H1 (cell line): ENCODE measurements at regions of chr21 and their contacts with region 1.

Region 1: DNA sequence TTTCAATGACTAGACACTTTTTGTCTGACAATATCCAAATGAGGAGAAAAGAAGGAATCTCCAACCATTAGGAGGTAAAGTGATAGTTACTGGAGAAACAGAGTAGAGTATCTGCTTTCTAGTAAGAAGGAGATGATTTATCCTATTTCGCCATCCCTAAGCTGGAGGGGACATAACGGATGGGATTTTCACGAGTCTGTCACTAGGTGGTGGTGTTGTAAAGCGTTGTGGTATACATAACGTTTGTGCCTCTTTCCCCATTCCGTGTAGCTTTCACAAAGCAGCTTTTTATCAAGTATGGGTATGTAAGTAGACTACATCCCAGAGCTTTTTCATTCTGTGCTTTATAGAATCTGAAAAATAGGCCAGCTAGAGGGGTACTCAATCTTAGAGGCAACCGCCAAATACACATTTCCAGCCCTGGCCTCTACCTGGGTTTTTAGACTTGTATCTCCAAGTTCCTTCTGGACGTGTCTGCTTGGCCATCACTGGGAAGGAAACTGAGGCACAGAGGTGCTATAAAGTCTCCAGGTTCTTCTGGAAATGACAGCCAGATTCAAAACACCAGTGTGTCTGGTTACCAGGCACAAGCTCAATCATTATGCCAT is 33.3 kb upstream of the FAM3B start:
- DNase-seq: no peak
- H3K4me3 ChIP-seq: no peak overlapping the region
- H3K27ac ChIP-seq: no peak overlapping the region
- H3K4me1 ChIP-seq: 0 out of 7 replicates have a peak, but pooled peaks cover 0 to 3% (median 0%) of the 10 kb centered on the region in 4 experiments
- H3K27me3 ChIP-seq: no peaks in the 10 kb centered on the region
- CTCF ChIP-seq: peak; percentile 17 to 82 (median 80)
- EP300 ChIP-seq: no peak
- POLR2A ChIP-seq: no peak
- RAD21 ChIP-seq: peak; percentile 95 to 96

Region 2: DNA sequence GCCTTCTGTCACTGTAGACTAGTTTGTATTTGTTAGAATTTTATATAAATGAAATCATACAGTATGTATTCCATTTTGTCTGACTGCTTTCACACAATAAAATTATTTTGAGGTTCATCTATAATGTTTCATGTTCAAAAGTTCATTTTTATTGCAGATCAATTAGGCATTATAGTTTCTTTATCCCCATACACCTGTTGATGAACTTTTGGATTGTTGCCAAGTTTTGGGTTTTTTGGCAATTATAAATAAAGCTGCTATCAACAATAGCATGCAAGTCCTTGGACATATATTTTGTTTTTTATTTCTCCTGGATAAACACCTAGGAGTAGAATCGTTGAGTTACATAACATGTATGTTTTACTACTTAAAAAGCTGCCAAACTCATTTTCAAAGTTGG is 13.8 kb before region 1 on chr21:
- CTCF ChIA-PET with region 1: interaction called, 25 read pairs
- POLR2A ChIA-PET with region 1: no interaction called
- DNase-seq: no peak
- H3K4me3 ChIP-seq: no peak overlapping the region
- H3K27ac ChIP-seq: no peak overlapping the region
- H3K4me1 ChIP-seq: no peaks in the 10 kb centered on the region
- H3K27me3 ChIP-seq: peaks cover 0 to 1% (median 0%) of the 10 kb centered on the region in 4 experiments; a peak in 1 of 7 replicates
- CTCF ChIP-seq: no peak
- EP300 ChIP-seq: no peak
- POLR2A ChIP-seq: no peak
- RAD21 ChIP-seq: no peak

Region 3: GRCh38 chr21:41349619-41350390 is 66.5 kb after region 1 on chr21:
- CTCF ChIA-PET with region 1: interaction called, 10 read pairs
- POLR2A ChIA-PET with region 1: no interaction called
- DNase-seq: no peak
- H3K4me3 ChIP-seq: no peak overlapping the region
- H3K27ac ChIP-seq: no peak overlapping the region
- H3K4me1 ChIP-seq: no peaks in the 10 kb centered on the region
- H3K27me3 ChIP-seq: no peaks in the 10 kb centered on the region
- CTCF ChIP-seq: no peak
- EP300 ChIP-seq: no peak
- POLR2A ChIP-seq: no peak
- RAD21 ChIP-seq: no peak

Region 4: DNA sequence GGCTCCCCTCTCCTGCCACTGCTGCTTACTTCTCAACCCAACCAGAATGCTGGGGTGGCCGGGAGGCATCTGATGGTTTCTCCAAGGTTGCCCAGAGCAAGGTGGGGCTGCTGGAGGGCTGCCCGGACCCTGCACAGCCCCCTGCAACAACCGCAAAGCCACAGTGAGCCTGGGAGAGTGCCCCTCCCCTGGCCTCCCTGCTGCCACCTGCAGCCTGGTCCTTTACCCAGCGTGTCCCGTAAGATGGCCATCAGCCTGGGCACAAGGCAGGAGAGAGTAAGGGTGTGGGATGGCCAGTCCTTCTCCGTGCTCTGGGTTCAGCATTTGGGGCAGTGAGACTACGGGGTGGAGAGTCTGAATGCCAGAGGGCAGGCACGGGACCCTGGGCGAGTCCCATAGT is 95.6 kb after region 1 on chr21:
- CTCF ChIA-PET with region 1: interaction called, 18 read pairs
- POLR2A ChIA-PET with region 1: no interaction called
- DNase-seq: no peak
- H3K4me3 ChIP-seq: no peak overlapping the region
- H3K27ac ChIP-seq: no peak overlapping the region
- H3K4me1 ChIP-seq: no peaks in the 10 kb centered on the region; a peak in 1 of 7 replicates
- H3K27me3 ChIP-seq: no peaks in the 10 kb centered on the region; a peak in 1 of 7 replicates
- CTCF ChIP-seq: peak in 2 of 3 experiments; percentile 37 to 42; a peak in 2 of 4 replicates
- EP300 ChIP-seq: no peak
- POLR2A ChIP-seq: no peak
- RAD21 ChIP-seq: no peak; a peak in 1 of 4 replicates

Region 5: DNA sequence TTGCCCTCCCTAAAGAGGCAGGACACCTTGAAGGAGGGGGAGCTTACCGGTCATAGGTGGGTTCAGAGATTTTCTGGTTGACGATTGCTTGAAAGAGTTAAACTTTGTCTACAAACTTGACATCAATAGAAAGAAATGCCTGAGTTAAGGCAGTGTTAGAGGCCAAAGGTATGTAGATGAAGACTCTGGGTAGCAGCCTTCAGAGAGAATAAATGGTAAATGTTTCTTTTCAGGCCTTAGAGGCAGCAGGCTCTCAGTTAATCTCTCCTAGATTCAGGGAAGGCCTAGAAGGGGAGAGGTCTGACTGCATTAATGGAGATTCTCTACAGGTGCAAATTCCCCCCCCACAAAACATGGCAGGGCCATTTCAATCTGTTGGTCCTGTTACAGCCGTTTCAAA is 170.4 kb after region 1 on chr21:
- CTCF ChIA-PET with region 1: interaction called, 36 read pairs
- POLR2A ChIA-PET with region 1: no interaction called
- DNase-seq: no peak
- H3K4me3 ChIP-seq: no peak overlapping the region
- H3K27ac ChIP-seq: no peak overlapping the region
- H3K4me1 ChIP-seq: peaks cover 0 to 10% (median 0%) of the 10 kb centered on the region in 4 experiments; a peak in 3 of 7 replicates
- H3K27me3 ChIP-seq: no peaks in the 10 kb centered on the region
- CTCF ChIP-seq: no peak
- EP300 ChIP-seq: no peak
- POLR2A ChIP-seq: no peak
- RAD21 ChIP-seq: no peak

Region 6: GRCh38 chr21:41548781-41549180 is 265.5 kb after region 1 on chr21:
- CTCF ChIA-PET with region 1: interaction called, 10 read pairs
- POLR2A ChIA-PET with region 1: no interaction called
- DNase-seq: no peak
- H3K4me3 ChIP-seq: no peak overlapping the region
- H3K27ac ChIP-seq: no peak overlapping the region
- H3K4me1 ChIP-seq: no peaks in the 10 kb centered on the region
- H3K27me3 ChIP-seq: no peaks in the 10 kb centered on the region
- CTCF ChIP-seq: no peak
- EP300 ChIP-seq: no peak
- POLR2A ChIP-seq: no peak
- RAD21 ChIP-seq: no peak